ENCODE measurements at regions of chr14 and their contacts with region 1.

Region 1: DNA sequence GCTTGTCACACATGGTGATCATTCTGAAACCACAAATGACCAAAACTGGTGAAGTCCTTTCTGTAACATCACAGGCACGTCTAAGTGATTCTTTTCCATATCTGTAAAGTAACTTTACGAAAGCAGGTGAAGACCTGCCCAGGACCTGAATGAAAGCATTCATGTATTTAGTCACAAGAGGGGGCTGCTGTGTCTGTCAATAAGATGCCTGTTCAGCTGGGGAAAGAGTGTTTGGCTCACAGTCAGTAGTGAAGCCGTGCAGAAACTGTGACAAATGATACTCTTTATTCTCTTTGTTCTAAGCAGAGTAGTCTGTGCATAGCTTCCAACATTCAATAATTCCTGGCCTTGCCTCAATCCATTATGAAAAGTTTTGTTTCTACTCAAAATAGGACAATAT is 373.5 kb upstream of the OR4E1 start:
- H3K4me3 ChIP-seq: no peak overlapping the region
- H3K27ac ChIP-seq: no peak overlapping the region
- H3K4me1 ChIP-seq: no peaks in the 10 kb centered on the region
- CTCF ChIP-seq: 0 out of 2 replicates have a peak, but pooled peaks have one; percentile 15

Region 2: DNA sequence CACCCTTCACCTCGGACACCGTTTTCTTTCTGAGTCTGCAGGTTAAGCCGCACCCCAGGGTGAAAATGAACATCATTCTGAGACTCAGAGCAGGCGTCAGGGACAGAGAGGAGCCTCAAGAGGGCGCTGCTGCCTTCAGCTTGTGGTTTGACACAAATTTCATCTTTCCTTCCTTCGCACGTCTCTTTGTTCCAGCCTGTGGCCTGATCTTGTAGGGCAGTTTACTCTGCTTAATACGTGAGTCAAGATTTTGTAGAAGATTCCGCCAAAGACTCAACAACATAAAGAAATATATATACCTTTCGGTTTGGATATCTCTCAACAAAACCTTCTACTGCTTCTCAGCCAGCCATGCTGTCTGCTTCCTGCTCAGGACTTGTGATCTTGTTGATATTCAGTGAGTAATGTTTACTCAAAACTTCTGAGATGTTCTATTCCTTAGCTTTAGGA is 44.2 kb before region 1 on chr14:
- CTCF ChIA-PET with region 1: interaction called, 16 read pairs
- POLR2A ChIA-PET with region 1: no interaction called
- H3K4me3 ChIP-seq: no peak overlapping the region
- H3K27ac ChIP-seq: no peak overlapping the region
- H3K4me1 ChIP-seq: no peaks in the 10 kb centered on the region
- CTCF ChIP-seq: no peak

Region 3: GRCh38 chr14:22070119-22071011 is 23.2 kb after region 1 on chr14:
- CTCF ChIA-PET with region 1: interaction called, 12 read pairs
- POLR2A ChIA-PET with region 1: no interaction called
- H3K4me3 ChIP-seq: peak overlapping the region; percentile 2; the same call in 1 of the 2 replicates
- H3K27ac ChIP-seq: no peak overlapping the region
- H3K4me1 ChIP-seq: no peaks in the 10 kb centered on the region
- CTCF ChIP-seq: no peak

Region 4: GRCh38 chr14:22099942-22100763 is 53.0 kb after region 1 on chr14:
- CTCF ChIA-PET with region 1: interaction called, 15 read pairs
- POLR2A ChIA-PET with region 1: no interaction called
- H3K4me3 ChIP-seq: no peak overlapping the region
- H3K27ac ChIP-seq: no peak overlapping the region
- H3K4me1 ChIP-seq: no peaks in the 10 kb centered on the region
- CTCF ChIP-seq: peak; percentile 73